Common myeloid progenitor, CD34-positive (primary cell): ENCODE measurements at regions of chr5 and their contacts with region 1.

Region 1: DNA sequence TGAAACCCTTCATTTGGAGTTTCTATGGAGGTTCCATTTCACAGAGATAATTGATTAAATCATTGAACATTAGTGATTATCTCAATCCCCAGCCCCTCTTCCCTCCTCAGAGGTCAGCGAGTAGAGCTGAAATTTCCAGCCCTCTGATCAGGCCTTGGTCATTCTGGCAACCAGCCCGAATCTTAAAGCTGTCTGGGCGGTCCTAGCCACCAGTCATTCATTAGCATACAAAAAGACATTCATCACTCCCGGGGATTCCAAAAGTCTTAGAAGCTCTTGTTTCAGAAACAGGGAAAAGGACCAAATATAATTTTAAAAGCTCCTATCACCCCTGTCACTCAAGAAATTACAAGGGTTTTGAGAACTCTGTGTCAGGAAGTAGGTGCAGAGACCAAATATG is 41.3 kb downstream of the ZNF474 start:
- DNase-seq: no peak
- H3K4me3 ChIP-seq: no peak overlapping the region
- H3K27ac ChIP-seq: no peak overlapping the region
- H3K4me1 ChIP-seq: peaks cover 6 to 16% (median 14%) of the 10 kb centered on the region in 4 experiments
- H3K27me3 ChIP-seq: no peaks in the 10 kb centered on the region

Region 2: GRCh38 chr5:121315786-121316185 is 854.8 kb before region 1 on chr5:
- CTCF ChIA-PET with region 1: no interaction called
- POLR2A ChIA-PET with region 1: no interaction called
- DNase-seq: no peak
- H3K4me3 ChIP-seq: no peak overlapping the region
- H3K27ac ChIP-seq: no peak overlapping the region
- H3K4me1 ChIP-seq: no peaks in the 10 kb centered on the region
- H3K27me3 ChIP-seq: no peaks in the 10 kb centered on the region

Region 3: DNA sequence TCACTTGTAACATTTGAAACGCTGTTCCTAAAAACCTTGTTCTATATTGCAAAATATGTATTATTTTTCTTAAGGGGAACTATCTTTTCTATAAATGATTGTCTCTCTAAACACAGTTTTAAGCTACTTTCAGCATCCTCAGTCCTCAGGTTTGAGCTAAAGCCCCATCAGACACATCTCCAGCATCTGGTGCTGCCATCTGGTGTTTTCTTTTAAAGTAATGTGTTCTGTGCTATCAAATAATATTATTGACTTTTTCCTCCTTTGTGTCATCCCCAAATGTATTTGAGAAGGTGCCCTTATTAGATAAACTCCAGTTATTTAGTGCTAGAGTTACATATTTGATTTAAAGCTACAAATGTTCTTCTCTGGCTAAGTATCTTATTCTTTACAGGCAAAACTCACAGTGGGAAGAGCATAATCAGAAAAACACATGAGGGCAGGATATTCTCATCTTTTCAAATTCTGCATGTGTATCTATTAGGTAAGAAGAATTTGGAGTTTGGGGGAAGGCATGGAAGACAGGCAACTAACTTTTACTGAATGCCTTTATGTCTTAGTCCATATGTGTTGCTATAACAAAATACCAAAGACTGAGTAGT is 13.8 kb before region 1 on chr5:
- CTCF ChIA-PET with region 1: interaction called, 13 read pairs
- POLR2A ChIA-PET with region 1: no interaction called
- DNase-seq: peak; percentile 41 to 68 (median 63)
- H3K4me3 ChIP-seq: no peak overlapping the region
- H3K27ac ChIP-seq: no peak overlapping the region
- H3K4me1 ChIP-seq: peaks cover 0 to 10% (median 8%) of the 10 kb centered on the region in 4 experiments
- H3K27me3 ChIP-seq: no peaks in the 10 kb centered on the region